CD4-positive, alpha-beta T cell (primary cell): ENCODE measurements at regions of chr10 and their contacts with region 1.

Region 1: DNA sequence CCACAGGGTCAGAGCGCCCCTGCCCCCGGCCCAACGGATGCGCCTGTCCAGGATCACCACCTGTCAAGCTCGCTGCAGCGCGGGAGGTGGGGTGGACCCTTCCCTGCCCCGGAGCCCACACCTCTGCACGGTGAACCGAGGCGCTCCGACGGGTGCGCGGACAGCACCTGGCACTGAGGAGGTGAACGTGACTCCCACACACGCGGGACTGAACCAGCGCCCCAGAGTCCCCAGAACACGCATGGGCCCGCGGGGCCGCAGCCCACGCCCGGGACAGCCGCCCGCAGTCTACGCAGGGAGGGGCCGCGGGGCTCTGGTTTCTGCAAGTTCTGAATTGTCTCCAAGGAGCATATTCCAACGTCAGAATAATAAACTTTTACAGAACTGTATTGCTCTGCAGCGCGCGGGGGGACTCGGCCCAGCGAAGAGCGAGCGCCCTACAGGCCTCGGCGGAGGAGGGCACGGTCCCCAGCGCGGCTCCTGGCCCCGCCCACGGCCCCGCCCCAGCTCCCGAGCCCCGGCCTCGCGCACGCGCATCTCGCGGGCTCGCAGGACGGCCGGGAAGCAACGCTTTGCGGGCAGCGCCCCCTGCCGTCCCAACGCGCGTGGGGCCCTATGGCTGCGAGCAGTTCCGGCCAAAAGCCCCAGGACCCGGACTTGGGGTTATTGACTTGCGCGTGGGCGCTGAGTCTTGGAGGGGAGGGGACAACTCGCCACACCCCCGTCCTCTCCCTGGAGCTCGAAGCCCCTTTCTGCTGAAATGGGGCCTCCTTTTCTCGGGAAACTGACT is 29.7 kb downstream of the OAT start:
- DNase-seq: peak; percentile 78 to 97 (median 92)
- ATAC-seq: peak; percentile 99
- H3K4me3 ChIP-seq: peak overlapping the region; percentile 51
- H3K4me3 Mint-ChIP-seq: peak overlapping the region; percentile 58
- H3K27ac ChIP-seq: no peak overlapping the region
- H3K27ac Mint-ChIP-seq: no peak overlapping the region
- H3K4me1 ChIP-seq: peaks cover 13% of the 10 kb centered on the region
- H3K4me1 Mint-ChIP-seq: peaks cover 4% of the 10 kb centered on the region
- H3K27me3 ChIP-seq: peaks cover 0 to 4% of the 10 kb centered on the region in 2 experiments
- H3K27me3 Mint-ChIP-seq: no peaks in the 10 kb centered on the region
- CTCF ChIP-seq: peak; percentile 94

Region 2: DNA sequence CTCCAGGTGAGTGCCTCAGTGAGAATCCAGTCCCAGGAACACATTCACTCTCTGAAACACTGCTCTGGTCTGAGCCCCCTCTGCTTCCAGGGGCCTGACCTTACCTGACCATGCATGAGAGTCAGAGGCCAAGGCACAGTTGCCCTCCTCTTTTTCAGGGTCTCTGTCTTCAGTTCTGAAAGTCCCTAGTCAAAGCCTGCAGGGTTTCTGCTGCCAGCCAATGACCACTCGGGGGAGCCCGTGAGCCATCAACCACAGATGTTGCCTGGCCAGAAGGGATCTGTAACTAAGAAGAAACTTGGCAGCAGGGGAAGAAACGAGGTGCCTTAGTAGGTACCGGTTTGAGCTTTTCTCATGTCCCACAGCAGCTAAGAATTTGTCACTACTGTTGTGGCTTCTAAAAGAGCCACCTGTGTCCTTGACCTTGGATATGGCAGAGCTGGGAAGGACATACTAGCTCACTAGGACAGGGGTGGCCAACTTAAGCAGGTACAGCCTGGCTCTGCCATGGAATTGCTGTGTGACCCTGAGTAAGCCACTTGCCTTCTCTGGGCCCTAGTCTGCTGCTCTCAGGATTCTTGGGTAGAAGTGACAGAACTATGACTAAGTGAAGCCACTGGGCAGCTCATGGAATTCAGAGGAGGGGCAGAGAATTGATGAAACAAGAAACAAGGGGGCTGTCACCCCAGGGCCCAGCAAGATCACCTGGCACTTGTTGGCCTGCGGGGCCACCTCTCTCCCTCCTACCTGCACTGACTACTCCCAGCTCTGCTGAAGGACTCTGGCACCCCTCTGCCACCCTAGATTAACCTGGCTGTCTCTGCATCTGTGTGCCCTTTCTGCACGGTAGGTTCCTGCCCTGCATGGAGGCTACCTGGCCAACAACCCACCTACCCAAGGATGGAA is 806.7 kb before region 1 on chr10:
- CTCF ChIA-PET with region 1: no interaction called
- POLR2A ChIA-PET with region 1: no interaction called
- intact Hi-C with region 1: loop called (anchors 1 to 5 kb)
- DNase-seq: peak; percentile 24 to 70 (median 47)
- ATAC-seq: no peak
- H3K4me3 ChIP-seq: no peak overlapping the region
- H3K4me3 Mint-ChIP-seq: no peak overlapping the region
- H3K27ac ChIP-seq: no peak overlapping the region
- H3K27ac Mint-ChIP-seq: no peak overlapping the region
- H3K4me1 ChIP-seq: no peaks in the 10 kb centered on the region
- H3K4me1 Mint-ChIP-seq: no peaks in the 10 kb centered on the region
- H3K27me3 ChIP-seq: peaks cover 28 to 31% of the 10 kb centered on the region in 2 experiments
- H3K27me3 Mint-ChIP-seq: peaks cover 48% of the 10 kb centered on the region
- CTCF ChIP-seq: peak; percentile 67

Region 3: GRCh38 chr10:123994417-123995081 is 394.5 kb before region 1 on chr10:
- CTCF ChIA-PET with region 1: interaction called, 69 read pairs
- POLR2A ChIA-PET with region 1: interaction called, 16 read pairs
- intact Hi-C with region 1: loop called (anchors 1 kb)
- DNase-seq: peak; percentile 62 to 88 (median 74)
- ATAC-seq: peak; percentile 87
- H3K4me3 ChIP-seq: peak overlapping the region; percentile 6
- H3K4me3 Mint-ChIP-seq: peak overlapping the region; percentile 38
- H3K27ac ChIP-seq: no peak overlapping the region
- H3K27ac Mint-ChIP-seq: no peak overlapping the region
- H3K4me1 ChIP-seq: peaks cover 17% of the 10 kb centered on the region
- H3K4me1 Mint-ChIP-seq: peaks cover 16% of the 10 kb centered on the region
- H3K27me3 ChIP-seq: peaks cover 27 to 49% of the 10 kb centered on the region in 2 experiments
- H3K27me3 Mint-ChIP-seq: peaks cover 82% of the 10 kb centered on the region
- CTCF ChIP-seq: peak; percentile 88

Region 4: DNA sequence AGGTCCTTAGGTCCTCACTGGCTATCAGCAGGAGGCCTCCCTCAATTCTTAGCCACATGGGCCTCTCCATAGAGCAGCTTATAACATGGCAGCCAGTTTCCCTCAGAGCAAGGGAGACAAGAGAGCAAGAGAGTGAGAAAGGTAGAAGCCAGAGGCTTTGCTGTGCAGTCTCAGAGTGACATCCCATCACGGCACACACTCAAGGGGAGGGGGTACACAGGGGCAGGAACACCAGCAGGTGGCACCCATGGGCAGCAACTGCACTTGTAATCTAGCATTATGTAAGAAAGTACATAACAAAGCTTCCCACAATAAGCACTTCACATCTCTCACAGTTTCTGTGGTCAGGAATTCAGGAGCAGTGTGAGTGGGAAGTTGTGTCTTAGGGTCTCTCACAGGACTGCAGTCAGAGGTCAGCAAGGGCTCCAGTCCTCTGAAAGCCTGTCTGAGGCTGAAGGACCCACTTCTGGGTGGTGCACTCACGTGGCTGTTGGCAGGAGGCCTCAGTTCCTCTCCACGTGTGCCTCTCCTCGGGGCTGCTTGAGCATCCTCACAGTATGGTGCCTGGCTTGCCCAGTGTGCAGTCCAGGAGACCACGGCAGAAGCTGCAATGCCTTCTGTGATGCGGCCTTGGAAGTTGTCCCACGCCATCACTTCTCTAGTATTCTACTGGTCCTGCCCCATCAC is 129.7 kb before region 1 on chr10:
- CTCF ChIA-PET with region 1: no interaction called
- POLR2A ChIA-PET with region 1: no interaction called
- intact Hi-C with region 1: loop called in 1 of 2 experiments (anchors 5 kb)
- DNase-seq: peak in 5 of 14 experiments; percentile 7 to 45 (median 15)
- ATAC-seq: no peak
- H3K4me3 ChIP-seq: no peak overlapping the region
- H3K4me3 Mint-ChIP-seq: no peak overlapping the region
- H3K27ac ChIP-seq: no peak overlapping the region
- H3K27ac Mint-ChIP-seq: no peak overlapping the region
- H3K4me1 ChIP-seq: no peaks in the 10 kb centered on the region
- H3K4me1 Mint-ChIP-seq: no peaks in the 10 kb centered on the region
- H3K27me3 ChIP-seq: no peaks in the 10 kb centered on the region
- H3K27me3 Mint-ChIP-seq: no peaks in the 10 kb centered on the region
- CTCF ChIP-seq: no peak

Region 5: GRCh38 chr10:124296121-124296812 is 92.8 kb before region 1 on chr10:
- CTCF ChIA-PET with region 1: no interaction called
- POLR2A ChIA-PET with region 1: no interaction called
- intact Hi-C with region 1: no loop called
- DNase-seq: no peak
- ATAC-seq: no peak
- H3K4me3 ChIP-seq: no peak overlapping the region
- H3K4me3 Mint-ChIP-seq: no peak overlapping the region
- H3K27ac ChIP-seq: no peak overlapping the region
- H3K27ac Mint-ChIP-seq: no peak overlapping the region
- H3K4me1 ChIP-seq: no peaks in the 10 kb centered on the region
- H3K4me1 Mint-ChIP-seq: no peaks in the 10 kb centered on the region
- H3K27me3 ChIP-seq: no peaks in the 10 kb centered on the region
- H3K27me3 Mint-ChIP-seq: peaks cover under 1% of the 10 kb centered on the region
- CTCF ChIP-seq: no peak

Region 6: DNA sequence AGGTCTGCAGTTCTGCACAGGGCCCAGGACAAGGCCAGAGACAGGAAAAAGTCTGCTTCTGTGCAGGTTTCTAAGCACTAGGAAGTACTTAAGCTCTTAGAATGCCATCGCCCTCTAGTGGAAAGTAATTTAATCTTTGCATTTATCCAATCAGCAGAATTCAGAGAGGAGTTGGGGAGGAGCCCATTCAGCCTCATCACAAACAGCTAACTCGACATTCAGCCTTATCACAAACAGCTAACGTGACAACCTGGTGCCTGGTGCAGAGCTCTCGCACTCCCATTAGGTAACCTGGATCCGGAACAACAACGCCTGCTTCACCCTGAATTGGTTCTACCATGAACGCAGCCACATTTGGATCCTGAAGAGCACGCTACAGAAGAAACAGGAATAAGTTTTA is 14.5 kb after region 1 on chr10:
- CTCF ChIA-PET with region 1: interaction called, 14 read pairs
- POLR2A ChIA-PET with region 1: interaction called, 3 read pairs
- intact Hi-C with region 1: no loop called
- DNase-seq: peak in 6 of 14 experiments; percentile 6 to 85 (median 54)
- ATAC-seq: peak; percentile 100
- H3K4me3 ChIP-seq: no peak overlapping the region
- H3K4me3 Mint-ChIP-seq: no peak overlapping the region
- H3K27ac ChIP-seq: peak overlapping the region in 1 of 2 donors; percentile 25
- H3K27ac Mint-ChIP-seq: peak overlapping the region; percentile 6
- H3K4me1 ChIP-seq: peaks cover 11% of the 10 kb centered on the region
- H3K4me1 Mint-ChIP-seq: peaks cover 9% of the 10 kb centered on the region
- H3K27me3 ChIP-seq: no peaks in the 10 kb centered on the region
- H3K27me3 Mint-ChIP-seq: no peaks in the 10 kb centered on the region
- CTCF ChIP-seq: peak; percentile 57

Region 7: DNA sequence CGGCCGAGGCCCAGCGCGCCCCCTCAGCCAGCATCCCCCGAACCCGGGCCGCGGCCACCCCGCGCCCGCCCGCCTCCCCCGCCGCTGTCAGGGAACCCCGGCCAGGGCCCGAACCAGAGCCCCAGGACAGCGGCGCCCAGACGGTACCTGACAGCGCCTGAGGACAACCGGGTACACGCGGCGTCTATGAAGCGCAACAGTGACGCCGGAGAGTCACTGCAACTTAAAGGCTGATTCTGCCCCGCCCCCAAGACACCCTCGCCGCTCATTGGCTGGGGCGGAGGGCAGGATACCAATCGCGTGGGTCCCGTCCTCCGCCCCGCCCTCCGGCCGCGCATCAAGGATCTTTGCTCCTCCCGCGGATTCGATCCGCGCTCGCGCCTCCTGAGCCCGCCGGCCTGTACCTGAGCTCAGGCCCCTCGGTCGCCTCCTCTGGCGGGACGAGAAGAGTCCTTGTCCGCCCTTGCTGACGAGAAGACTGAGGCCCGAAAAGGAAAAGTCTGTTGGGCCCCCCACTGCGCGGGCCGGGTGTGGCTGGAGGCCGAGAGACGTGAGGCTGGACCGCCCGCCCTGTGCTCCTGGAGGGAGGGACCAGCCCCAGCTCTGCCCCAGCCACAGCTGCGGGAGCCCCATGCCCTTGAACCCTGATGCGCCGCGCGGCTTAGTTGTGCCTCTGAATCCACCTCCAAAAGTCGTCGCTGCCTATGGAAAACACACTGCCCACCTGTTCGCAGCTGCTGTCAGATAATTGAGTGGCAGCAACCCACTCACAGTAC is 29.9 kb after region 1 on chr10 and contains the start of gene OAT:
- CTCF ChIA-PET with region 1: interaction called, 14 read pairs
- POLR2A ChIA-PET with region 1: interaction called, 6 read pairs
- intact Hi-C with region 1: no loop called
- DNase-seq: peak; percentile 91 to 98 (median 96)
- ATAC-seq: peak; percentile 97
- H3K4me3 ChIP-seq: peak within 1 kb of the TSS; percentile 75
- H3K4me3 Mint-ChIP-seq: peak within 1 kb of the TSS; percentile 92
- H3K27ac ChIP-seq: peak within 1 kb of the TSS; percentile 23 to 44
- H3K27ac Mint-ChIP-seq: peak within 1 kb of the TSS; percentile 82
- H3K4me1 ChIP-seq: peaks cover 14% of the 10 kb centered on the region
- H3K4me1 Mint-ChIP-seq: peaks cover 41% of the 10 kb centered on the region
- H3K27me3 ChIP-seq: peaks cover 0 to 3% of the 10 kb centered on the region in 2 experiments
- H3K27me3 Mint-ChIP-seq: peaks cover 9% of the 10 kb centered on the region
- CTCF ChIP-seq: no peak
- total RNA-seq, gene OAT: 48.5 to 54.9 TPM

Region 8: GRCh38 chr10:124461438-124462347 is 72.7 kb after region 1 on chr10 and contains the start of gene LHPP:
- CTCF ChIA-PET with region 1: interaction called, 5 read pairs
- POLR2A ChIA-PET with region 1: no interaction called
- intact Hi-C with region 1: loop called in 1 of 2 experiments (anchors 2 kb)
- DNase-seq: peak; percentile 65 to 93 (median 84)
- ATAC-seq: peak; percentile 94
- H3K4me3 ChIP-seq: peak within 1 kb of the TSS; percentile 65
- H3K4me3 Mint-ChIP-seq: peak within 1 kb of the TSS; percentile 92
- H3K27ac ChIP-seq: peak within 1 kb of the TSS; percentile 53 to 67
- H3K27ac Mint-ChIP-seq: peak within 1 kb of the TSS; percentile 83
- H3K4me1 ChIP-seq: peaks cover 36% of the 10 kb centered on the region
- H3K4me1 Mint-ChIP-seq: peaks cover 27% of the 10 kb centered on the region
- H3K27me3 ChIP-seq: peaks cover 0 to 8% of the 10 kb centered on the region in 2 experiments
- H3K27me3 Mint-ChIP-seq: peaks cover 10% of the 10 kb centered on the region
- CTCF ChIP-seq: peak; percentile 17
- total RNA-seq, gene LHPP: 15.3 to 19.6 TPM